ENCODE measurements at regions of chrX and their contacts with region 1.

Region 1: GRCh38 chrX:100883654-100884053 is 9.5 kb upstream of the NOX1 start:
- DNase-seq: peak; percentile 53 to 58
- H3K4me3 ChIP-seq: no peak overlapping the region
- H3K4me3 Mint-ChIP-seq: peak overlapping the region; percentile 70
- H3K27ac Mint-ChIP-seq: peak overlapping the region; percentile 63
- H3K4me1 ChIP-seq: peaks cover 39% of the 10 kb centered on the region
- H3K4me1 Mint-ChIP-seq: peaks cover 18% of the 10 kb centered on the region
- H3K27me3 ChIP-seq: no peaks in the 10 kb centered on the region
- H3K27me3 Mint-ChIP-seq: no peaks in the 10 kb centered on the region
- CTCF ChIP-seq: no peak

Region 2: DNA sequence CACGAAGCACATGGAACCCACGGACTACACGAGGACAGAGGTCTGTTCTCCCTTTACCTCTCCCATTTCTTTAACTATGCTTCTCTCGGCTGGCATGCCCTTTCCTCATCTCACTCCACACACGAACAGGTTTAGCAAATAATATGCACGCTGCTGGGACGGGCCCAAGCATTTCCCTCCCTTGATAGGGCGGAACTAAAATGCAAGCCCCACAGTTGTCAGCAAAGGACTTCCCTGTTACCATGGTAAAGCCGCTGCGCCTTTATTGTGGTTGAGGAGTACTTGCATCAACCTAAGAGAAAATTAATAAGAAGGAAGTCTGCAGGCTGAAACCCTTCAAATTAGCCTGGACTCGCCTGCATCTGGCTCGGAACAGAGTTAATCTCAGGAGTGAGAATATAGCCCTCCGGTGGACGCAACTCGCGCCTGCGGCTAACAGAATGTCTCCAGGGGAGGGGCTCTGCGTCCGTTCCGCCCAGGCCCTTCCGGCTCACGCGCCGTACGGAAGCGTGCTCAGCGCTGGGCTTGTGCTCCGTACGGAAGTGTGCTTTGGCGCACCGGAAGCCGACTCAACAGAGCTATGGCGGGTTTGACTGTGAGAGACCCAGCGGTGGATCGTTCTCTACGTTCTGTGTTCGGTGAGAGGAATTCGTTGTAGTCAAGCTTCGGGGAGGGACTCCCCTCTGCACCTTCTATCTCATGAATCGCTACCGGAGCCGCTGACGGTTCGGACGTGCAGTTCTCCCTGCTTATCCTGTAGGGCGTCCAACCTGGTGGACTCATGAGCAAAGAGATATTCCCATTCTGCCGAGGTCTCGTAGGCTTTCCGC is 63.6 kb before region 1 on chrX and contains the start of gene CSTF2:
- CTCF ChIA-PET with region 1: no interaction called
- POLR2A ChIA-PET with region 1: interaction called, 3 read pairs
- intact Hi-C with region 1: loop called (anchors 2 kb)
- DNase-seq: peak; percentile 80
- H3K4me3 ChIP-seq: peak within 1 kb of the TSS; percentile 50
- H3K4me3 Mint-ChIP-seq: peak within 1 kb of the TSS; percentile 98
- H3K27ac Mint-ChIP-seq: peak within 1 kb of the TSS; percentile 98
- H3K4me1 ChIP-seq: no peaks in the 10 kb centered on the region
- H3K4me1 Mint-ChIP-seq: peaks cover 7% of the 10 kb centered on the region
- H3K27me3 ChIP-seq: no peaks in the 10 kb centered on the region
- H3K27me3 Mint-ChIP-seq: no peaks in the 10 kb centered on the region
- CTCF ChIP-seq: no peak
- total RNA-seq, gene CSTF2: 41.5 and 44.9 TPM in 2 replicates

Region 3: DNA sequence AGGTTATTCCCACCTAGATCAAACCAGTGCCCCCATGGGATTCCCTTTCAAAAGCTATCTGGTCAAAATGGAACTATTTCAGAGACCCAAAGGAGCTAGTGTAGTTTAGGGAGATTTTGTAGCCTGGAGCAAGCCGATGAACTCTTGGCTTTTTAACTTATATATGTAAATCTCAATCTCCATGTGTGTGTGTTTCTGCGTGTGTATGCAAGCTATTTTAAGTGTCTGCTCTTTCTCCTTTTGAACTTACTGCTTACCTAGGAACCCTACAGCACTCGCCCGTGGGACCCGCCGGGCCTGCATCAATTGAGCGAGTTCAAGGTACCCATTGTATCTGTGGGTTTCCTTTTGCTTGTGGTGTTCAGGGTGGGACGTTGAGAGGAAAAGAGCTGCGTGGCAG is 53.1 kb before region 1 on chrX:
- CTCF ChIA-PET with region 1: no interaction called
- POLR2A ChIA-PET with region 1: no interaction called
- intact Hi-C with region 1: no loop called
- DNase-seq: no peak
- H3K4me3 ChIP-seq: no peak overlapping the region
- H3K4me3 Mint-ChIP-seq: no peak overlapping the region
- H3K27ac Mint-ChIP-seq: no peak overlapping the region
- H3K4me1 ChIP-seq: no peaks in the 10 kb centered on the region
- H3K4me1 Mint-ChIP-seq: no peaks in the 10 kb centered on the region
- H3K27me3 ChIP-seq: no peaks in the 10 kb centered on the region
- H3K27me3 Mint-ChIP-seq: no peaks in the 10 kb centered on the region
- CTCF ChIP-seq: no peak

Region 4: DNA sequence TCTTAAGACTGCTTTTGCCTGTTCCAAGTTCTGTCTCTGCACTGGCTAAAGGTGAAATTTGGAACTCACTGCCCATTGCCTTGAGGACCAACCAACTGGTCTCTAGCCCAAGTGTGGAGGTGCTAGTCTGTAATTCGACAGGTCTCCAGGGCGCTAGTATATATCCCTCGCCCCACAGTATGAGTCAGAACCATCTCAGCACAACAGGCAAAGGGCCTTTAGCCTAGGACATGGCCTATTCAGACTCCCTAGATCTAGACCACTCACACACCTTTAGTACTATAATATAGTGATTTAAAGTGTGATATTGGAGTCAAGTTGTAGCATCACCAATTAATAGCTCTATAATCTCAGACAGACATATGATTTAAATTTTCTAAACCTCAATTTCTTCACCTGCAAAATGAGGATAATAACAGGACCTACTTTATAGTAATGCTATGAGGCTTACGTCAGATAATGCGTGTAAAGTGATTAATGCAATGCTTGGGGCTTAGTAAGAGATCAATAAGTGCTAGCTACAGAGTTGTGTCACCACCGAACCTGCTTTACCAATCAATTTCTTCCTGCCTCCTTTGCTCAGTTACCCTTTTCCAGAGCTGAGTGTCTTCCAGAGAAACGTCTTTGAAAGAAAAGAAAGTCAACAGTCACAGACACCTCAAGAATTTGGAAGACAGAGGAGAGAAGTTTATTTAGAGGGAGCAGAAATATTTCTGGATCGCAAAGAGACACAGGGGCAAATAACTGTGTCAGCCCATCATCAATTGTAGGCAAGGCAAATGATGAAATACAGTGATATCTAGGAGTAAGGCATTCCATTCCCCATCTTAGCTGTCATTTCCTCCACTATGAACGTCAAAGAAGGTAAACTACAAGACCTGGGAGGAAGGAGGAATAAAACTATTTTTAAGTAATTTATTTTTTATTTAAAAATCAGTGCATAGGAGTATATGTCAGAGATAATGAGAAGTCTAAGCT is 11.8 kb before region 1 on chrX:
- CTCF ChIA-PET with region 1: no interaction called
- POLR2A ChIA-PET with region 1: interaction called, 3 read pairs
- intact Hi-C with region 1: loop called (anchors 1 kb)
- DNase-seq: peak in 1 of 2 experiments; percentile 13
- H3K4me3 ChIP-seq: no peak overlapping the region
- H3K4me3 Mint-ChIP-seq: peak overlapping the region; percentile 61
- H3K27ac Mint-ChIP-seq: peak overlapping the region; percentile 11
- H3K4me1 ChIP-seq: peaks cover 11% of the 10 kb centered on the region
- H3K4me1 Mint-ChIP-seq: peaks cover 23% of the 10 kb centered on the region
- H3K27me3 ChIP-seq: no peaks in the 10 kb centered on the region
- H3K27me3 Mint-ChIP-seq: no peaks in the 10 kb centered on the region
- CTCF ChIP-seq: no peak

Region 5: GRCh38 chrX:100911726-100912125 is 28.1 kb after region 1 on chrX:
- CTCF ChIA-PET with region 1: no interaction called
- POLR2A ChIA-PET with region 1: no interaction called
- intact Hi-C with region 1: no loop called
- DNase-seq: no peak
- H3K4me3 ChIP-seq: no peak overlapping the region
- H3K4me3 Mint-ChIP-seq: no peak overlapping the region
- H3K27ac Mint-ChIP-seq: no peak overlapping the region
- H3K4me1 ChIP-seq: peaks cover 15% of the 10 kb centered on the region; the same call in 1 of the 2 replicates
- H3K4me1 Mint-ChIP-seq: peaks cover 13% of the 10 kb centered on the region
- H3K27me3 ChIP-seq: no peaks in the 10 kb centered on the region
- H3K27me3 Mint-ChIP-seq: no peaks in the 10 kb centered on the region
- CTCF ChIP-seq: no peak

Region 6: DNA sequence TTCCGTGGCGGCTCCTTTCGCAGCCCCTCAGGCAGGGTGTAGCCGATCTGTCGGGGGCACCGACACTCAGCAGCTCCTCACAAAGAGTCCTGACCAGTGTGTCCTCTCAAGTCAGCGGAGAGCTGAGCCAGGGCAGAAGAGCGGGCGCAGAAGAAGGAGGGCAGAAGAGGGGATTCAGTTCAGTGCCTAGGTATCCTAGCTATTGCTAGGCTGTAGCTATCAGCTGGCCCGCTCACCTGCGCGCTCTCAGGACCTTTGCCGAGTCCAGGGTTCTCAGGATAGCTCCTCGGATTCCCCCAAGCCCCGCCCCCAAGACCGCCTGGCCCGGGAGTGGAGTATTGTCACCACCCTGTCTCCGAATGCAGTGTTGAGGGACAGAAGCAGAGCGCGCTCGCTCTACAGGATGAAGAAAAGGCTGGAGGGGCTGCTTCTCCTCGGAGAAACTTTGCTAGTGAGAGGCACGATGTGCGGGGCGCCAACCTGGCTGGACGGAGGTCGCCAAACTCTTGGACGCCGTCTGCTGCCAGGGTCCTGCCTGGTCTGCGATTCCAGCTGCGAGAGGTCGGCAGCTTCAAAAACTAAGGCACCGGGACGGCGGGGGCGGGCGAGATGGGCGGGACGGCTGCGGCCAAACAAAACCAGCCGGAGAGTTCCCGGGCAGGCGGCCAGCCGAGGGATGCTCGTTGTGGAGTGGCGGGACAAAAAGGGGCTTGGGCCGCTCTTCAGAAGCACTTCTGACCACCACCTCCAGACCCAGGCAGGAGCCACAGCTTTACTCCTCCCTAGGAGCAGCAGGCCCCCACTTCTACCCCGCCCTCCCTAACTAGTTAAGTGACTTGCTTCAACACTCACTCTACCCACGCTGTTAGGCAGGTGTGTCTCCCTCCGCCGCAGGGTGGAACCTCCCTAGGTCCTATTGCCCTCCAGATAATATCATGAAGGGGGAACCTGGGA is 45.3 kb after region 1 on chrX and contains the start of gene XKRX:
- CTCF ChIA-PET with region 1: no interaction called
- POLR2A ChIA-PET with region 1: no interaction called
- intact Hi-C with region 1: loop called (anchors 2 kb)
- DNase-seq: peak; percentile 88
- H3K4me3 ChIP-seq: peak within 1 kb of the TSS; percentile 49
- H3K4me3 Mint-ChIP-seq: peak within 1 kb of the TSS; percentile 88
- H3K27ac Mint-ChIP-seq: peak within 1 kb of the TSS; percentile 83
- H3K4me1 ChIP-seq: peaks cover 13% of the 10 kb centered on the region
- H3K4me1 Mint-ChIP-seq: peaks cover 7% of the 10 kb centered on the region
- H3K27me3 ChIP-seq: no peaks in the 10 kb centered on the region
- H3K27me3 Mint-ChIP-seq: no peaks in the 10 kb centered on the region
- CTCF ChIP-seq: no peak
- total RNA-seq, gene XKRX: 28.7 and 29.7 TPM in 2 replicates

Region 7: GRCh38 chrX:101040197-101040596 is 156.5 kb after region 1 on chrX:
- CTCF ChIA-PET with region 1: no interaction called
- POLR2A ChIA-PET with region 1: no interaction called
- intact Hi-C with region 1: no loop called
- DNase-seq: no peak
- H3K4me3 ChIP-seq: no peak overlapping the region
- H3K4me3 Mint-ChIP-seq: no peak overlapping the region
- H3K27ac Mint-ChIP-seq: no peak overlapping the region
- H3K4me1 ChIP-seq: no peaks in the 10 kb centered on the region
- H3K4me1 Mint-ChIP-seq: no peaks in the 10 kb centered on the region
- H3K27me3 ChIP-seq: no peaks in the 10 kb centered on the region
- H3K27me3 Mint-ChIP-seq: no peaks in the 10 kb centered on the region
- CTCF ChIP-seq: no peak

Region 8: DNA sequence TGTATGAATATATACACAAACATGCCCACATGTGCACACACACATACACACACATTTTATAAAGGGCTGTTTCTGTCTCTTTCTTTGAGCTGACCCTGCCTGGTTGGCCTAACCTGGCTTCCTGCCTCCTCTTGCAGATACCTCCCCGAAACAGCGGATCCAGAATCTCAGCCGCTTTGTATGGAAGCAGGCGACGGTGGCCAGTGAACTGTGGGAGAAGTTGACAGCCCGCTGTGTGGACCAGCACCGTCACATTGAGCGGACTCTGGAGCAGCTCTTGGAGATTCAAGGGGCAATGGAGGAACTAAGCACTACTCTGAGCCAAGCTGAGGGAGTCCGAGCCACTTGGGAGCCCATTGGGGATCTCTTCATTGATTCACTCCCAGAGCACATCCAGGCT is 357.9 kb after region 1 on chrX:
- CTCF ChIA-PET with region 1: no interaction called
- POLR2A ChIA-PET with region 1: no interaction called
- intact Hi-C with region 1: no loop called
- DNase-seq: no peak
- H3K4me3 ChIP-seq: no peak overlapping the region
- H3K4me3 Mint-ChIP-seq: no peak overlapping the region
- H3K27ac Mint-ChIP-seq: no peak overlapping the region
- H3K4me1 ChIP-seq: no peaks in the 10 kb centered on the region
- H3K4me1 Mint-ChIP-seq: no peaks in the 10 kb centered on the region
- H3K27me3 ChIP-seq: no peaks in the 10 kb centered on the region
- H3K27me3 Mint-ChIP-seq: peaks cover 3% of the 10 kb centered on the region
- CTCF ChIP-seq: no peak